Activated T-helper 2 cell treated with anti-CD3 and anti-CD28 coated beads, Interferon-gamma antibody, Interleukin-2, Interleukin-4, amounts not matched to agents 10 μg/mL and 5 μg/mL and 100 μg/mL, durations not matched to agents 14 hours and 24 hours and 36 hours (primary cell): ENCODE measurements at regions of chr10 and their contacts with region 1.

Region 1: DNA sequence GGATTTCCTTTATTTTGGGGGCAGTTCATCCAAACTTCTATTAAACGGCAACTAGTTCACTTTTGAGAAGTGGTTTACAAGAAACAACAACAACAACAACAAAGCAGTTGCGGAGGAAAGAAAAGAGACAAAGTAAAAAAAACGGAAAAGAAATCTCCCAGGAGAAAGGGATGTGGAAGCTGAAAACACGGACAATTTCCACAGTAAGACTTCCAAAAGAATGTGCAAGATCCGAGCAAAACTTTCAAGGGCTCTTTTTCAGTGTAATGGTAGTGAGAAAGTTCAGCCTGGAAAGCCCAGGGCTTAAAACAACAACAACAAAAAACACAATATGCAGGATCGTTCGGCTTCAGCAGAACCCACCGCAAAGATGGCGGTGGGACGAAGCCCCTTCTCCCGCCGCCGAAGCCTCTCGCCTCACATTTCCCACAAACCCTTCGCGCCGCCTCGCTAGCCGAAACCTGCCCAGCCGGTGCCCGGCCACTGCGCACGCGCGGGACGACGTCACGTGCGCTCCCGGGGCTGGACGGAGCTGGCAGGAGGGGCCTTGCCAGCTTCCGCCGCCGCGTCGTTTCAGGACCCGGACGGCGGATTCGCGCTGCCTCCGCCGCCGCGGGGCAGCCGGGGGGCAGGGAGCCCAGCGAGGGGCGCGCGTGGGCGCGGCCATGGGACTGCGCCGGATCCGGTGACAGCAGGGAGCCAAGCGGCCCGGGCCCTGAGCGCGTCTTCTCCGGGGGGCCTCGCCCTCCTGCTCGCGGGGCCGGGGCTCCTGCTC is at the start of gene TNKS2:
- DNase-seq: peak; percentile 92
- H3K4me3 Mint-ChIP-seq: peak within 1 kb of the TSS; percentile 98
- H3K27ac Mint-ChIP-seq: peak within 1 kb of the TSS; percentile 98
- H3K4me1 Mint-ChIP-seq: peaks cover 56% of the 10 kb centered on the region
- H3K27me3 Mint-ChIP-seq: peaks cover 3% of the 10 kb centered on the region
- total RNA-seq, gene TNKS2: 27.2 and 28.1 TPM in 2 replicates

Region 2: DNA sequence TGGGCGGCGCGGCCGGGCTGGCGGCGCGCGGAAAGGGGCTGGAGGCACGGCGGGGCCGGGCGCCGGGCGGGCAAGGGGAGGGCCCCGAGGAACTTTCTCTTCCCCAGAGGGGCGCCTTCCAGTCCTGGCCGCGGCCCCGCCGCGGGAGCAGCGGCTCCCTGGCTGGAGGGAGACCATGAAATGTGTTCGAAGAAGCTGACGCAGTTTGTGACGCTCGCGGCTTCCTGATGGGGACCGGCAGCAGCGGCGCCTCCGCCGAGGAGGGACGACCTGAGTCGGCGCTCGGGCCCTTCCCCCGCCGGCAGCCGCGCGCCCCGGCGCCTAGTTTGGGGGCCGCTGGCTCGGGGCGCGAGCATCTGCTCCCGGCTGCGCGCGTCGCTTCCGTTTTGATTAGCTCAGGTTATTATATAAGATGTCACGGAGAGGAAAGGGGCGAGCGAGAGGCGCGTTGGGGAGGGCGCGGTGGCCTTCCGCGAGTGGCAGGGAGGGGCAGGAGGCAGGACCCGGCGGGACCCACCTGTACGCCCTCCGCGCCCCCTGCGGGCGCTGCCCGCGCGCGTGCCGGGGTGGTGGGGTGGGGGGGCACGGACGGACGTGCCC is 634.7 kb before region 1 on chr10:
- intact Hi-C with region 1: loop called (anchors 10 kb)
- DNase-seq: peak; percentile 70
- H3K4me3 Mint-ChIP-seq: peak overlapping the region; percentile 85
- H3K27ac Mint-ChIP-seq: peak overlapping the region; percentile 76
- H3K4me1 Mint-ChIP-seq: peaks cover 34% of the 10 kb centered on the region
- H3K27me3 Mint-ChIP-seq: no peaks in the 10 kb centered on the region

Region 3: GRCh38 chr10:91758303-91759146 is 39.5 kb before region 1 on chr10:
- intact Hi-C with region 1: loop called (anchors 2 kb)
- DNase-seq: no peak
- H3K4me3 Mint-ChIP-seq: no peak overlapping the region
- H3K27ac Mint-ChIP-seq: no peak overlapping the region
- H3K4me1 Mint-ChIP-seq: no peaks in the 10 kb centered on the region
- H3K27me3 Mint-ChIP-seq: peaks cover 49% of the 10 kb centered on the region

Region 4: GRCh38 chr10:91816981-91817380 is 18.9 kb after region 1 on chr10:
- intact Hi-C with region 1: no loop called
- DNase-seq: no peak
- H3K4me3 Mint-ChIP-seq: no peak overlapping the region
- H3K27ac Mint-ChIP-seq: no peak overlapping the region
- H3K4me1 Mint-ChIP-seq: no peaks in the 10 kb centered on the region
- H3K27me3 Mint-ChIP-seq: no peaks in the 10 kb centered on the region

Region 5: DNA sequence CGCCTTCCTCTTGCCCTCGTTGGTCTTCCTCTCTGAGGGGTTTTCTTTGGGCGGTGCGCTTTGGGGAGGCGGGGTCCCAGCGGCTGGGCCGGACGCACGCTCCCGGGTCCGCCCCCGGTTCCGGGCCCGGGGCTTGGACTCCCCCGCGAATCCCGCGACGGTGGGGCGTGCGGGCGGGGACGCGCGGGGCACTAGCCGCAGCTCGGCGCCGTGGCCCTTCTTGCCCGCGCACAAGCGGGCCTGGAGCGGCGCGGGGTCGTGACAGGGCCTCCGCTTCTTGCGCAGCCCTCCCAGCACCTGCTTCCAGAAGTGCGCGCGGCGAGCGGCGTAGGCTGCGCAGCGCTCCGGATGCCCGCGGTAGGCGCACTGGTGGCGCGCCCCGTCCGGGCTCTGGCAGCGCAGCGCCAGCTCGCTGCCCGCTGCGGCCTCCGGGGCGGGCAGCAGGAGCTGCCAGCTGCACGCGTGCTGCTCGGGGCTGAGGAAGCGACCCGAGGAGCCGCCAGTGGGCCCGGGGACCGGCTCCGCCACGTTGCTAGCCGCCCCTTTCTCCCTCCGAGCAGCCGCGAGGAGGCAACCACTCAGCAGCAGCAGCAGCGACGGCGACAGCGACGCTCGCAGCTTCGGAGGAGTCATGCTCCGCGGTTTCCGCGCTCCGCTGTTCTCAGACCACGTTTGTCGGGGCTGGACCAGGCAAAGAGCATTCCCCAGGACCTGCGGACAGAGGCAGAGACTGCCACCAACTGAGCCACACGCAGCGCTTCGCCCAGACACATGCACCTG is 110.5 kb after region 1 on chr10:
- intact Hi-C with region 1: loop called (anchors 1 kb)
- DNase-seq: peak; percentile 69
- H3K4me3 Mint-ChIP-seq: peak overlapping the region; percentile 88
- H3K27ac Mint-ChIP-seq: peak overlapping the region; percentile 78
- H3K4me1 Mint-ChIP-seq: peaks cover 20% of the 10 kb centered on the region
- H3K27me3 Mint-ChIP-seq: peaks cover 12% of the 10 kb centered on the region

Region 6: GRCh38 chr10:91944880-91945630 is 147.0 kb after region 1 on chr10:
- intact Hi-C with region 1: loop called (anchors 1 kb)
- DNase-seq: no peak
- H3K4me3 Mint-ChIP-seq: peak overlapping the region; percentile 55
- H3K27ac Mint-ChIP-seq: peak overlapping the region; percentile 78
- H3K4me1 Mint-ChIP-seq: peaks cover 26% of the 10 kb centered on the region
- H3K27me3 Mint-ChIP-seq: no peaks in the 10 kb centered on the region